Posterior vena cava (tissue), 2 donors: ENCODE measurements at regions of chr21 and their contacts with region 1.

Region 1: DNA sequence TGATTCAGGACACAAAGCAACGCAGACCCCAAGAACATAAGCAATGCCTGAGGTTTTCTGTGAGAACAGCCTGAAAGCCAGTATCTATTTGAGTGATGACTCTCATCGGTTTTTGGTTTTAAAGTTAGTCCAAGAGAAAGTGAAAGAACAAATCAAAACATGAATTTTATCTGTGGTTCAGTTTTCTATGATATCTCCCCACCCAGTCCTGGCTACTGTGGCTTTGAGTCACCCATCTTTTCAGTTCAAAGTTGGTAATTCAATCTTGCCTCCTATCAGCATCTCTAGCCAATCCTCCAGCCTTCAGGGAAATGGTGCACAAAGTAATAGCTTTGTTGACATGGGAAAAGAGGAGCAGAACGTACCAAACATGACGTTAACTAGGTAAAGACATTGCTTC is 40.5 kb upstream of the KRTAP19-8 start:
- DNase-seq: no peak

Region 2: DNA sequence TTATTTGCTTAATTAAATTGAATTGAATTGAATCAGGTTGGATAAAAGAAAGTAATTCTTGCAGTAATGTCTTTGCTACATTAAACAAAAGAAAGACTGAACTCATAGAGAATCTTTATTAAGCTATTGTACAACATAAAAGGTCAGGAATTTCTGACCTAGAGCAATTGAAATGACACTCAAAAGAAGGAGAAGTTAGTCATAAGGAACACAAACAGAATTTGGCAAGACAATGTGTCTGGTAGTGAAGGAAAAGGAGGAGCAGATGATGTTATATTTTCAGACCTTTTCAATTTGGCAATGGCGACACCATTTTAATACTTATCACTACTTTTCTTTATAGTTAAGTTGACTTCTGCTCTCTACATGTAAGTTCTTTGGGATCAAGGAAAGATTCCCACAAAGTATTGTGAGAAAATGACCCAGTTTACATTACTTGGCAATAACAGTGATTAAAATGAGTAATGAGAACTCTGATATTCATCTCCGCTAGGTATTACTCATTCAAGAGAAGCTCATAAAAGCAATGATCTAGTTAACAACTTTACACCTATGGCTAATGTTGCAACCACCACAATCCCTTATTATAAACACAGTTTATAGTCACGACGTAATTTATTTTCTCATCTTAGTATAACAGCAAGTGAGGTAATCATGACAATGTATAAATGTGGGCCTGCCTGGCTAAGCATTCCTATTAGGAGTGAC is 308.9 kb before region 1 on chr21:
- intact Hi-C with region 1: loop called in 1 of 2 experiments (anchors 10 kb)
- DNase-seq: no peak

Region 3: GRCh38 chr21:31198575-31198974 is 119.8 kb after region 1 on chr21:
- intact Hi-C with region 1: no loop called
- DNase-seq: no peak